Endothelial cell of umbilical vein (primary cell): ENCODE measurements at regions of chr7 and their contacts with region 1.

Region 1: DNA sequence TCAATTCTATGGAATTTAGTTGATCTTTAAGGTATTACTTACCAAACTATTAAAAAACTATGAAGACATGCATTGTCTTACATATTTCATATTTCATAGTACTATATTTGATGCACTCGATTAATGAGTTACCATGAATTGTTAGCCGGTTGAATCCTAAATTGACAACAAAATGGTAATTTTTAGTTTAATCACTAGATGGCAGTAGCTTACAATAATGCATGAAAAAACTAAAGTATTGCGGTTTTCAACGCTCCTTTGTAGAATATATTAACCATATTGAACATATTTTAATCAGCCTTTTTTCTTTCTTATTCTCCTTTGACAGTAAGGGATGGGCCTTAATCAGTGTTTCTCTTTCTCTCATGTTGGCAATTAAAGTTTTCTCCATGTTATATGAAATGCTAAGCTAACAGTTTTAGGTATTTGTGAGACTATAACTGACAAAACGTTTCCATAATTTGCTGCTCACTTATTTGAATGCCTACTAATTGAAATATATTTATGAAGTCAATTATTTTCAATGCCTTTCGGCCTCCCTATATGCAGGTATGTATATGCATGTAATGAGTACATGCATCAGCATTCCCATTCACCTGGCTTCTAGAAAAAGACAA is 48.5 kb upstream of the ARL4A start:
- DNase-seq: peak; percentile 50
- H3K4me3 ChIP-seq: no peak overlapping the region
- H3K27ac ChIP-seq: no peak overlapping the region
- H3K4me1 ChIP-seq: no peaks in the 10 kb centered on the region
- H3K27me3 ChIP-seq: peaks cover 8 to 9% of the 10 kb centered on the region in 2 experiments
- CTCF ChIP-seq: peak in 1 of 2 donors; percentile 17
- POLR2A ChIP-seq: no peak

Region 2: GRCh38 chr7:12090757-12091221 is 548.2 kb before region 1 on chr7:
- CTCF ChIA-PET with region 1: no interaction called
- POLR2A ChIA-PET with region 1: no interaction called
- dilution Hi-C with region 1: no loop called
- intact Hi-C with region 1: no loop called
- DNase-seq: no peak
- H3K4me3 ChIP-seq: no peak overlapping the region
- H3K27ac ChIP-seq: no peak overlapping the region
- H3K4me1 ChIP-seq: no peaks in the 10 kb centered on the region
- H3K27me3 ChIP-seq: no peaks in the 10 kb centered on the region
- CTCF ChIP-seq: no peak
- POLR2A ChIP-seq: no peak

Region 3: DNA sequence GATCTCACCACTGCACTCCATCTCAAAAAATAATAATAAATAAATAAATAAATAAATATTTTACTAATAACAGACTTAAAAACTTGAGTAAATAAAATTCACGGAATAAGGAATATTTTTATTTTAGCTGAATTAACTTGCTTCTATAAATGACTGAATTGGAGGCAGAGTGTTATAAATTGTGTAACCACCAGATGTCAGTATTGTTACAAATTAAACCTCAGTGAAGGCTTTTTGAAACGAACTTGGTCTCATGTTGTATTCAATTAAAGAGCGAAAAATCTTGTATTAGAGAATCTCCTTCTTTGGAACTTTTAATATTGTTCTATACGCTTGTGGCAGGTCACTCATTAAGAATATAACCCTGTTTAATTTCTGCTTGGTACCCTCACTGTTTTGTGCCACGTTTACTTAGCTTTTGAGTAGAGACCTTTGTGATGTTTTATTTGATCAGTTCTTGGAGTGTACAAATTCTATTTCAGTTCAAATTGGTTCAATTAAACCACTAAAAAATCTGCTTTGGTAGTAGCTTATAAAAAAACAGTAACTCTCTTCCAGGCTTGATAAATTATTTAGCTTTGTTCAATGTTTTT is 114.1 kb before region 1 on chr7:
- CTCF ChIA-PET with region 1: interaction called, 15 read pairs
- POLR2A ChIA-PET with region 1: no interaction called
- dilution Hi-C with region 1: no loop called
- intact Hi-C with region 1: no loop called
- DNase-seq: peak; percentile 75
- H3K4me3 ChIP-seq: no peak overlapping the region
- H3K27ac ChIP-seq: no peak overlapping the region
- H3K4me1 ChIP-seq: no peaks in the 10 kb centered on the region
- H3K27me3 ChIP-seq: peaks cover 2 to 24% of the 10 kb centered on the region in 2 experiments
- CTCF ChIP-seq: peak; percentile 7 to 33
- POLR2A ChIP-seq: no peak

Region 4: DNA sequence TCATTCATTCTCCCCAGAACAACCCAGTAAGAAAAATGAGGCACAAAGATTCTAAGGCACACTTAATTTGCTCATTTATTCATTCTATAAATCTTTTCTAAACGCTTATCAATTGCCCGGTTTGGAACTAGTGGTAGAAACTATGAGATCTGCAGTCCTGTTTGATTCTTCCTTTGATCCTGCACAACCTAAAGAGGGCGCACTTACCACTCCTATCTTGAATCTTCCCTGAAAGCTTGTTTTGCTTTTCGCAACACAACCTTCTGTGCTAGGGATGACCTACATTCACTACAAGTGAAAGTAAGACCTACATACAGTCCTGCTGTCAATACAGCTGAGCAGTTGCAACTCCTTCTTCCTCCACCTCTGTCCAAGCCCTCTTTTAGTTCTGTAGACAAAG is 35.9 kb after region 1 on chr7:
- CTCF ChIA-PET with region 1: interaction called, 13 read pairs
- POLR2A ChIA-PET with region 1: no interaction called
- dilution Hi-C with region 1: no loop called
- intact Hi-C with region 1: loop called (anchors 2 kb)
- DNase-seq: peak; percentile 50
- H3K4me3 ChIP-seq: no peak overlapping the region
- H3K27ac ChIP-seq: no peak overlapping the region
- H3K4me1 ChIP-seq: no peaks in the 10 kb centered on the region
- H3K27me3 ChIP-seq: no peaks in the 10 kb centered on the region
- CTCF ChIP-seq: peak; percentile 39 to 43
- POLR2A ChIP-seq: no peak

Region 5: DNA sequence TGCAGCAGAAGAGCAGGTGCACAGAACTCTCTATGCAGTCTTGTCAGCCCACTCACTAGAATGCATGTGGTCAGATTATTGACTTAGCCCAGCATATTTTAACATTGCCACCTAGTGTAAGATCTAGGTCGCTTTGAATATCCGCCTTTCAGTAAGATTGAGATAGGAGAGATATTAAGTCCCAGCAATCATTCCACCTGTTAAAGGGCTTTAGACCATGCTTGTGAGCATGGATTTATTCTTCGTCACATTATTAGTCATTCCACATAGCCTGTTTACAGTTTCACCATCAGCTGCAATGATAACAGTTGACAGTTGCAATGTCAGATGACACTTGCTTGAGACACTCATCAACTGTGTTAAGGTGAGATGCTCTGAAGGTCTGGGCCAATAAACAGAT is 540.1 kb after region 1 on chr7:
- CTCF ChIA-PET with region 1: no interaction called
- POLR2A ChIA-PET with region 1: no interaction called
- dilution Hi-C with region 1: no loop called
- intact Hi-C with region 1: loop called (anchors 1 kb)
- DNase-seq: peak; percentile 40
- H3K4me3 ChIP-seq: no peak overlapping the region
- H3K27ac ChIP-seq: no peak overlapping the region
- H3K4me1 ChIP-seq: no peaks in the 10 kb centered on the region
- H3K27me3 ChIP-seq: no peaks in the 10 kb centered on the region
- CTCF ChIP-seq: peak in 1 of 2 donors; percentile 16
- POLR2A ChIP-seq: no peak

Region 6: GRCh38 chr7:13231216-13231615 is 592.3 kb after region 1 on chr7:
- CTCF ChIA-PET with region 1: no interaction called
- POLR2A ChIA-PET with region 1: no interaction called
- dilution Hi-C with region 1: no loop called
- intact Hi-C with region 1: no loop called
- DNase-seq: no peak
- H3K4me3 ChIP-seq: no peak overlapping the region
- H3K27ac ChIP-seq: no peak overlapping the region
- H3K4me1 ChIP-seq: no peaks in the 10 kb centered on the region
- H3K27me3 ChIP-seq: no peaks in the 10 kb centered on the region
- CTCF ChIP-seq: no peak
- POLR2A ChIP-seq: no peak

Region 7: DNA sequence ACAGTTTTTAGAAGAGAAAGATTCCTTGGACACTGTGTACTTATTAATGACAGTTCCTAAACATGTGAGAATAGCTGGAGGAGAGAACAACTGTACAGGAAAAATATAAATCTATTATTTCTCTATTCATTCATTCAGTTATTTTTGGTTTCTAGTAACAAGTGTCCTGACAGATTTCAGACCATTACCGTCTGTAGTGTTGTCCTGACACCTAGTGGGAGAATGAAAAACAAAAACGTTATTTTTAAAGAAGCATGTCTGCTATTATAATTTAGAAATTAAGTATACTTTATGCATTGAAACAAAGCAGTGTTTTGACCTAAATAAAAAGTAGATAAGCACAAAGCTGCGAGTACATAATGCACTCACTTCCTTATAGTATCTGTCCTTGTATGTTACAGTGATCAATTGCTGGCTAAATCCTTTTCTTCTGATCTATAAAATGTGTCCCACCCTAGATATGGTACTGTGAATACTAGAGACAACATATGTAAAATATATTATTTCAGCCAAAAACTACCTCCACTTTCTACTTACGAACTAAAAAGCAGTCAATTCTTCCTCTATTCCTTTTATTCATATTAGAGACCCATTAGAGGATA is 624.1 kb after region 1 on chr7:
- CTCF ChIA-PET with region 1: interaction called, 29 read pairs
- POLR2A ChIA-PET with region 1: no interaction called
- dilution Hi-C with region 1: no loop called
- intact Hi-C with region 1: loop called (anchors 1 kb)
- DNase-seq: peak; percentile 70
- H3K4me3 ChIP-seq: no peak overlapping the region
- H3K27ac ChIP-seq: no peak overlapping the region
- H3K4me1 ChIP-seq: no peaks in the 10 kb centered on the region
- H3K27me3 ChIP-seq: peaks cover 0 to 3% of the 10 kb centered on the region in 2 experiments
- CTCF ChIP-seq: peak; percentile 25 to 33
- POLR2A ChIP-seq: no peak